ENCODE measurements at regions of chrX and their contacts with region 1.

Region 1: DNA sequence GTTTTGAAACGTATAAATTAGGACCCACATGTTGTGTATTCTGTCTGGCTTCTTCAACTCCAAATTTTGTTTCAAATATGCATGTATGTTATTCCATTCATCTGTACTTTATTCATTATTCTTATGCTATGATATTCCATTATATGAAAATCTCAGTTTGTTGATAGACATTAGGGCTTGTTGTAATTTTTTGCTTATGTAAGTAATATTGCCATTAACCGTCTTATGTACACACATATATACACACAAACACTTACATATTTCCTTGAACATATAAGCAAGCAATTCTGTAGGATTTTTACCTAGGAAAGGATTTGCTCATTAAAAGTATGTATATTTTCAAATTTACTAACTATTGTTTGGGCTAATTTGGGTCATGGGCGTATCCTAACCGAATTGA is 808.0 kb upstream of the MAGEB2 start:
- DNase-seq: no peak
- ATAC-seq: no peak
- H3K4me3 ChIP-seq: no peak overlapping the region
- H3K27ac ChIP-seq: no peak overlapping the region
- H3K4me1 ChIP-seq: no peaks in the 10 kb centered on the region
- H3K27me3 ChIP-seq: no peaks in the 10 kb centered on the region
- CTCF ChIP-seq: no peak
- POLR2A ChIP-seq: no peak
- RAD21 ChIP-seq: no peak

Region 2: DNA sequence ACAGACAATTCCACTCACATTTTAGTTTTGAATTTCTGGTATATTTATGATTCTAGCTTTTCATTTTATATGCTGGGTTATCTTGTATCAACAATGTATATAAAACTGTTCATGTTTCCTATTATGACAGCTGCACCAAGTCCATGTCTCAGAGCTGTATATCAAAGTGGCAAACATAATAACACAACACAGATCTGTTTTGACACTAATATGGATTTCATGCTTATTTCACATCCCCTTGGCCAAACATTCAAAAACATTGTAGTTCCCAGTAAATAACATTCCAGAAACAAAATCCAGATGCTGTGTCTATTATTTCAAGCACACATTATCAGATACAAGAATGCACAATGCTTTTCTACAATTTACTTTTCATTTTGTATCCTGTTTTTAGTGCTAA is 427.4 kb after region 1 on chrX:
- CTCF ChIA-PET with region 1: no interaction called
- POLR2A ChIA-PET with region 1: interaction called, 11 read pairs
- dilution Hi-C with region 1: no loop called
- in situ Hi-C with region 1: no loop called
- intact Hi-C with region 1: no loop called
- DNase-seq: no peak
- ATAC-seq: no peak
- H3K4me3 ChIP-seq: no peak overlapping the region
- H3K27ac ChIP-seq: no peak overlapping the region
- H3K4me1 ChIP-seq: no peaks in the 10 kb centered on the region
- H3K27me3 ChIP-seq: no peaks in the 10 kb centered on the region; the same call in 1 of the 2 replicates
- CTCF ChIP-seq: no peak
- POLR2A ChIP-seq: no peak
- RAD21 ChIP-seq: no peak

Region 3: GRCh38 chrX:30296408-30297254 is 889.3 kb after region 1 on chrX:
- CTCF ChIA-PET with region 1: no interaction called
- POLR2A ChIA-PET with region 1: no interaction called
- dilution Hi-C with region 1: no loop called
- in situ Hi-C with region 1: no loop called
- intact Hi-C with region 1: no loop called
- DNase-seq: no peak
- ATAC-seq: no peak
- H3K4me3 ChIP-seq: no peak overlapping the region
- H3K27ac ChIP-seq: no peak overlapping the region
- H3K4me1 ChIP-seq: no peaks in the 10 kb centered on the region
- H3K27me3 ChIP-seq: no peaks in the 10 kb centered on the region; the same call in 1 of the 2 replicates
- CTCF ChIP-seq: no peak
- POLR2A ChIP-seq: no peak
- RAD21 ChIP-seq: no peak

Measured in IMR-90 (cell line).